SK-N-SH (cell line): ENCODE measurements at regions of chr10 and their contacts with region 1.

Region 1: DNA sequence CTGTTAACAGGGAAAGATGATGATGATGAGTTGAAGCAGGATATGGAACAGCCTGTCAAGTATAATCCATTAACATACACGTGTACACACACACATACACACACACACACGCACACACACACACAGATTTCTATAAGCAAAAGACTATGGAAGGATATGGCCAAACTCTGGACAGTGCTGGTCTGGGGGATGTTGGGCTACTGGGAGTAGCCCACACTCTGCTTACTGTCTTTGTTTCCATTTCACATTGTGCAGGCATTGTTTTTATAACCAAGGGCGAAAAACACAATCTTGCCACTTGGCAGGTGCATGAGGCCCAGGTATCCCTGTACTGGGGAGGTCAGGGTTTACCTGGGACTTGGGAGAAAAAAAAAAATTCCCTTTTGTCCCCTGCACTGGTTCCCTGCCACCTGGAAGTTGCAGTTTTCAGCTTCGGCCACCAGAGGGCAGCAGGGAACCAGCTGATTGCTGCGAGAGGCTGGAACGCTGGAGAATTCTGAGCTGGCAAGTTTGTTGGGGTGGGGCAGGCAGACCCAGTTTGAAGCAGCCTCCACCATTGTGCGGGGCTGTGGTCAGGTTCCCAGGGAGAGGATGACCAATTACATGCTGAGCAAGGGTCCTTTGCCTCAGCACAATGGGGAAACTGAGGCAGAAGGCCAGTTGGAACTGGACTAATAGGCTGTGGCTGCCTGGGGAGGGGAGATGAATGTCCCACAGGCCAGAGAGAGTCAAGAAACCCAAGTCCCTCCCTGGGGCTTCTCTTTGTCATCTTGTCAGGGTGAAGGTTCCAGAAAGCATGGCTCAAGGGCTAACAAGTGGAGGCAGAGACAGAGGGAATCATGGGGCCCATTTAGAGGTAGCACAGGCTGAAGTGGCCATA is 27.3 kb downstream of the PPIF start:
- DNase-seq: peak; percentile 84
- H3K4me3 ChIP-seq: no peak overlapping the region
- H3K27ac ChIP-seq: no peak overlapping the region
- H3K4me1 ChIP-seq: peaks cover 7% of the 10 kb centered on the region in 2 experiments; a peak in 2 of 4 replicates
- H3K27me3 ChIP-seq: no peaks in the 10 kb centered on the region
- CTCF ChIP-seq: peak; percentile 91
- EP300 ChIP-seq: no peak
- RAD21 ChIP-seq: peak; percentile 99

Region 2: DNA sequence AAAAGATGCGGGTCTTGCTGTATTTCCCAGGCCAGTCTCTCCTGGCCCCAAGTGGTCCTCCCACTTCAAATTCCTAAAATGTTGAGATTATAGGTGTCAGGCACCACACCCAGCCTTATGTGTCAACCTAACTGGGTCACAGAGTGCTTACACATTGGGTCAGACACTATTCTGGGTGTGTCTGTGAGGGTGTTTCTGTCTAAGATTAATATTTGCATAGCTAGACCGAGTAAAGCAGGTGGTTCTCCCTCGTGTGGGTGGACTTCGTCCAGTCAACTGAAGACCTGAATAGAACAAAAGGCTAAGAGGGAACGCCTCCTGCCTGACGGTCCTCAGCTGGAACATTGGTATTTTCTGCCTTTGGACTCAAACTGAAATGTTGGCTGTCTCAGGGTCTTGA is 15.8 kb before region 1 on chr10:
- CTCF ChIA-PET with region 1: interaction called, 13 read pairs
- POLR2A ChIA-PET with region 1: no interaction called
- DNase-seq: no peak
- H3K4me3 ChIP-seq: no peak overlapping the region
- H3K27ac ChIP-seq: no peak overlapping the region
- H3K4me1 ChIP-seq: no peaks in the 10 kb centered on the region
- H3K27me3 ChIP-seq: no peaks in the 10 kb centered on the region
- CTCF ChIP-seq: no peak
- EP300 ChIP-seq: no peak
- RAD21 ChIP-seq: no peak

Region 3: DNA sequence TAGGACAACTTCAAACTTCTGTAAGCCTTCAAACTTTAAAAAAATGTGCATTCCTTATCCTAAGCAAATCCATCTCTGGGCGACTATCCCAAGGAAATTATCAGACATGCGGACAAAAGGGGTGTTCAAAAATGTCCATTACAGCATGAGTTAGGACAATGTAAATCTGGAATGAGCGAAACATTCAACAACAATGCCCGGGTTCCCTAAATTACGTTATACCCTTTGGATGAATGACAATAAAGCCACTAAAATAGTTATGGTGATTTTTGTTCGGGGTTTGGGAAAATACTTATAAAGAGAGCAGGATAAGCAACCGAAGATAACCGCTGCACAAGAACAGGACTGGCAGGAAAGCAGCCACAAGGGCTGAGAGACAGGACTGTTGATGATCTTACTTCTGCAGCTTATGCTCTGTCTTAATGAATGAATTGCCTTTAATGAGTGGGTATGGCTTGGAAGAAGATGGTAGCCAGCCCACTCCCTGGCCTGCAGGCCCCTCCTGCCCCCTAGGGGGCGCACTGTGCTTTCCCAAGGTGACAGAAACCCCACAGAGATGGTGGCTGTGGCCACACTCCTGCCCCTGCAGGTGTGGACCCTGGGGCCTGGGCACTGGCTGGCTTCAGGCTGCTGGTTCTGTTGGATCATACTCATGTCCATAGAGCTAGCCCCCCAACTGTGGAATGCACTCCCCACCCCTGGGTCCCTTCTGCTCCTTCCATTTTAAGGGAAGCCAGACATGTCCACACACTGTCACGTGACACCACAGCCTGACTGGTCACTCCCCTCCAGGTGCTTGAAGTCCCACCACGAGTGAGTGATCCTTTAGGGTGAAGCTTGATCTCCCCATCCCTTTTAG is 25.8 kb after region 1 on chr10:
- CTCF ChIA-PET with region 1: interaction called, 24 read pairs
- POLR2A ChIA-PET with region 1: no interaction called
- DNase-seq: peak; percentile 78
- H3K4me3 ChIP-seq: peak overlapping the region in 1 of 2 experiments; percentile 26; a peak in 2 of 4 replicates
- H3K27ac ChIP-seq: peak overlapping the region; percentile 96
- H3K4me1 ChIP-seq: peaks cover 25 to 84% of the 10 kb centered on the region in 2 experiments
- H3K27me3 ChIP-seq: no peaks in the 10 kb centered on the region
- CTCF ChIP-seq: peak; percentile 80
- EP300 ChIP-seq: no peak
- RAD21 ChIP-seq: peak; percentile 71

Region 4: GRCh38 chr10:79459243-79459642 is 84.7 kb after region 1 on chr10:
- CTCF ChIA-PET with region 1: interaction called, 29 read pairs
- POLR2A ChIA-PET with region 1: no interaction called
- DNase-seq: no peak
- H3K4me3 ChIP-seq: no peak overlapping the region
- H3K27ac ChIP-seq: no peak overlapping the region
- H3K4me1 ChIP-seq: peaks cover 0 to 6% of the 10 kb centered on the region in 2 experiments; a peak in 1 of 4 replicates
- H3K27me3 ChIP-seq: no peaks in the 10 kb centered on the region; the same call in 1 of the 2 replicates
- CTCF ChIP-seq: no peak
- EP300 ChIP-seq: no peak
- RAD21 ChIP-seq: no peak

Region 5: DNA sequence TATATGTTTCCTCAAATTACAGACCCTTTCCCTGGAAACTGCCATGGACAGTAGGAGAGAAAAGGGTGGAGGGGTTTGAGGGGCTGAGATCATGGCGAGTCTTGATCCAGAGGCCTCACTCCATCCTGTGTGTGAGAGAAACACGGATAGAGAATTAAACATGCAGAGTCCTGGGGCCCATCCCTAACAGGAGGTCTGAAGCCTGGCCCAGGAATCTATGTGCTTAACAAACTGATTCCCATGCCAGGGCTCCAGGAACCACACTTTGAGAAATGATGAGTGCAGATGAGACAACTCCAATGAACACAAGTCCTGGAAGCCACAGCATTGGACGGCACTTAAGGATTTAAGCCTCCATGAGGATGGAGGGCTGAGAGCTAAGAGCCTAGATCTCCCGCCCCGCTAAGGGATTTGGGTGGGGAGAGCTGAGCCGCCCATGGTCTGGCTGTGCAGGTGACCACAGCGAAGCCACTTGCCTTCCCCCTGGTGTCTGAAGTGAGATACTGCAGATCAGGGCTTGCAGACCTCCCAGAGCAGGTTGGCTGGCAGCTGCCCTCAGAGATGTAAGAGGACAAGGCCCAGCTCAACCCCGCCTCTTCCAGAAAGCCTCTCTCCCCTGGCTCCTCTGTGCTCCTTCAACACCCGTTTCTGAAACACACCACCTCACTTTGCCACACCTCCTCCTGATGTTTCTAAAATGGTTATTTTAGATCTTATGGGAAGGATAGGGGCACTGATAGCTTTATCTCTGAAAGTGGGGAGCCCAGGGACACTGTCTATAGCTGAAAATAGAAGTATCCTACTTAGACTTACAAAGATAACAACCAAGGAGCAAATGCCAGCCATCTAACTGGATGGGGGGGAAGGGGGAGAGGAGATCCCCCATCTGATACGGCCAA is 113.0 kb after region 1 on chr10:
- CTCF ChIA-PET with region 1: interaction called, 99 read pairs
- POLR2A ChIA-PET with region 1: no interaction called
- DNase-seq: peak; percentile 77
- H3K4me3 ChIP-seq: no peak overlapping the region; a peak in 1 of 4 replicates
- H3K27ac ChIP-seq: peak overlapping the region; percentile 89 to 91
- H3K4me1 ChIP-seq: peaks cover 27 to 34% of the 10 kb centered on the region in 2 experiments
- H3K27me3 ChIP-seq: no peaks in the 10 kb centered on the region
- CTCF ChIP-seq: peak; percentile 73
- EP300 ChIP-seq: no peak
- RAD21 ChIP-seq: peak; percentile 78